ENCODE measurements at regions of chr2 and their contacts with region 1.

Region 1: DNA sequence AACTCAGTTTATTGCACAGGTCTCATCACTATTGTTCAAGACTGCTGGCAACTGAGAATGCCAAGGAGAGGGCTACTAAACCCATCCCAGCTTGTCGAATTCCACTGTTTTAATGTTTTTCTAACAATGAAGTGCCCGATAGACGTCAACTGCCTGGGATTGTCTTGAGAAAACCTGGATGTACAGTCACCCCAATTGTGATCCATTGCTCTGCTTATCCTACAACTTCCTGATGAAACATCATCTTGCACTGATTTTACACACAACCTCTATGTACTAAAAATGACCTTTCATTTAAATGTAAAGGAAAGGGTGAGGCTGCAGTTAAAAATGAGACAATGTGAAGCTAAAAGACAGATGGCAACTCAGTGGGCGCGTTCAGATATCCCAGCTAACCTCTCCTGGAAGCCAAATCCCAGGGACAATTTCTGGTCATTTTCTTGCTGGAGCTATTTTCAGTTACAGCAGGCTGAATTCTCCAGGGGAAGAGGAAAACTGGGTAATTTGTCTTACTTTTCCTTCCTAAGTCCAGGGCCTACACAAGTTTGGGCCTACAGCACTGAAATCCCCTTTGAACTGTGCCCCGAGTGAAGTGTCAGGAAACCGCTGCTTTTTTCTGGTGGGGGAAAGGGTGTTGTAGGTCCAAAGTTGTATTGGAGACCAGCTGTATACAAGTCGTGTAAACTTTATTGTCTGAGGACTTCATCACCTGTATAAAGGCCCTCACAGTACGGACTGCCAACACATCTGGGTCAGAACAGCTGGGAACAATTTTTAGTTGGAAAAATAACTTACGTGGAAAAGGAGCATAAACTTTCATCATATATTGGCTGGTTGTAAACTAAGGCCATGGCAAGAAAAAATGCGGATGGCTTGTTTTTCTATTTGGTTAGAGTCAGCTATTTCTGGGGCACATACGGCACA is 68.9 kb upstream of the LTBP1 start:
- DNase-seq: no peak
- H3K4me3 Mint-ChIP-seq: no peak overlapping the region
- H3K27ac Mint-ChIP-seq: no peak overlapping the region
- H3K4me1 Mint-ChIP-seq: no peaks in the 10 kb centered on the region
- H3K27me3 Mint-ChIP-seq: no peaks in the 10 kb centered on the region

Region 2: GRCh38 chr2:32384529-32384928 is 493.3 kb before region 1 on chr2:
- CTCF ChIA-PET with region 1: no interaction called
- POLR2A ChIA-PET with region 1: no interaction called
- intact Hi-C with region 1: no loop called
- DNase-seq: no peak
- H3K4me3 Mint-ChIP-seq: no peak overlapping the region
- H3K27ac Mint-ChIP-seq: no peak overlapping the region
- H3K4me1 Mint-ChIP-seq: no peaks in the 10 kb centered on the region
- H3K27me3 Mint-ChIP-seq: no peaks in the 10 kb centered on the region

Region 3: DNA sequence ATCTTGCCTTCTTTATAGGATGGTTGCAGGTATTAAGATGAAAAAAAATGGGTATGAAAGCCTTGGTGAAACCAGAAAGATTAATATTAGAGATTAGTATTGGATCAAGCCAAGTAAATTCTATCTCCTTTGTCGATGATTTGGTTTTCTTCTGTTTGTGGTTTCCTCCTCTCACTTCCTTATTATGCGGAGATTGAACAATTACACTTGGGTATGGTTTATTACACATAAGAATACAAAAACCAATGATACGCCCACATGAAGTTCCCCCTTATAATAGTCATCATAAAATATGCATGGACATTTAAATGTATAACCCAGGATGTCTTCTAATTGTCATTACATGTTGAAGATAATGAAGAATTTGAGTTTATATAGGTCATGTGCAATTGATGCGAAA is 73.8 kb after region 1 on chr2:
- CTCF ChIA-PET with region 1: no interaction called
- POLR2A ChIA-PET with region 1: no interaction called
- intact Hi-C with region 1: loop called (anchors 2 kb)
- DNase-seq: no peak
- H3K4me3 Mint-ChIP-seq: no peak overlapping the region
- H3K27ac Mint-ChIP-seq: no peak overlapping the region
- H3K4me1 Mint-ChIP-seq: peaks cover 4% of the 10 kb centered on the region
- H3K27me3 Mint-ChIP-seq: peaks cover 7% of the 10 kb centered on the region